Breast epithelium (tissue), 4 donors: ENCODE measurements at regions of chr11 and their contacts with region 1.

Region 1: DNA sequence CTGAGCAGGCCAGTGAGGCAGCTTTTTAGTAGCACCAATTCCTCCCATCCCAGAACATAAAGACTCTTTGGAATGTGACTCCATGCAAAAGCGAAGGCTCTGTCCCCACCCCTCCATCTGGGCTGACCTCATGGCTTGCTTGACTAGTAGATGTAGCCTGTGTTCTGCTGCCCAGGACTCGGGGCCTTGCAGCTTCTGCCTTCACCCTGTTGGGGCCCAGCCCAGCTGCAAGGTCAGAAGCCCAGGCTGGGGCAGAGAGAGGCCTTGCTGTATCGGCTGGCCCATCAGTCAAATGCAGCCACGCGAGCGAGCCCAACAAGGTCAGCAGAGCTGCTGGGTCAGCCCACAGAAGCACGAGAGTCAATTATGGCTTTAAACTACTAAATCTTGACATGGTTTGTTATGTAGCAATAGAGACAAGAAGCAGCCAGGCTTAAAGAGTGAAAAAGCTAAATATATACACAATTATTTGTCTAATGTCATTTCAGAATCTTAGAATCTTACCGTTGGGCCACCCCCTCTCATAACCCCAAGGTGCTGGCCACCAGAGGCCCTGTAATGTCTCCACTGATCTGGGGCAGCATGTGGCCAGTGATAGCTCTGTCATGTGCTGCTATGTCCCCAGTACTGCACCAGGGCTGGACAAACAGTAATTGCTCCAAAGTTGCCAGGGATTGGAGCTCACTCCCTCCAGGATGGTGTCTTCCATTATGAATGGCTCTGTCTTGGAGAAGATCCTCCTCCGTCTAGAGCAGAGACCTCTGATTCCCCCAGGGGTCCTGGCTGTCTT is 10.4 kb upstream of the WNT11 start:
- DNase-seq: no peak
- H3K4me3 ChIP-seq: no peak overlapping the region
- H3K27ac ChIP-seq: no peak overlapping the region
- H3K4me1 ChIP-seq: no peaks in the 10 kb centered on the region
- H3K27me3 ChIP-seq: peaks cover 0 to 7% of the 10 kb centered on the region in 2 donors
- CTCF ChIP-seq: no peak
- POLR2A ChIP-seq: no peak

Region 2: GRCh38 chr11:76320929-76321328 is 104.2 kb after region 1 on chr11:
- intact Hi-C with region 1: loop called (anchors 1 kb)
- DNase-seq: no peak
- H3K4me3 ChIP-seq: no peak overlapping the region
- H3K27ac ChIP-seq: no peak overlapping the region
- H3K4me1 ChIP-seq: no peaks in the 10 kb centered on the region
- H3K27me3 ChIP-seq: peaks cover 5 to 25% of the 10 kb centered on the region in 2 donors
- CTCF ChIP-seq: no peak
- POLR2A ChIP-seq: no peak

Region 3: GRCh38 chr11:76526878-76527277 is 310.1 kb after region 1 on chr11:
- intact Hi-C with region 1: no loop called
- DNase-seq: no peak
- H3K4me3 ChIP-seq: no peak overlapping the region
- H3K27ac ChIP-seq: no peak overlapping the region
- H3K4me1 ChIP-seq: no peaks in the 10 kb centered on the region
- H3K27me3 ChIP-seq: no peaks in the 10 kb centered on the region
- CTCF ChIP-seq: no peak
- POLR2A ChIP-seq: no peak

Region 4: GRCh38 chr11:76654298-76654851 is 437.6 kb after region 1 on chr11:
- intact Hi-C with region 1: no loop called
- DNase-seq: peak in 1 of 2 donors; percentile 44
- H3K4me3 ChIP-seq: no peak overlapping the region
- H3K27ac ChIP-seq: peak overlapping the region; percentile 65 to 89
- H3K4me1 ChIP-seq: no peaks in the 10 kb centered on the region
- H3K27me3 ChIP-seq: no peaks in the 10 kb centered on the region
- CTCF ChIP-seq: no peak
- POLR2A ChIP-seq: no peak